Endothelial cell of umbilical vein (primary cell): ENCODE measurements at regions of chr6 and their contacts with region 1.

Region 1: DNA sequence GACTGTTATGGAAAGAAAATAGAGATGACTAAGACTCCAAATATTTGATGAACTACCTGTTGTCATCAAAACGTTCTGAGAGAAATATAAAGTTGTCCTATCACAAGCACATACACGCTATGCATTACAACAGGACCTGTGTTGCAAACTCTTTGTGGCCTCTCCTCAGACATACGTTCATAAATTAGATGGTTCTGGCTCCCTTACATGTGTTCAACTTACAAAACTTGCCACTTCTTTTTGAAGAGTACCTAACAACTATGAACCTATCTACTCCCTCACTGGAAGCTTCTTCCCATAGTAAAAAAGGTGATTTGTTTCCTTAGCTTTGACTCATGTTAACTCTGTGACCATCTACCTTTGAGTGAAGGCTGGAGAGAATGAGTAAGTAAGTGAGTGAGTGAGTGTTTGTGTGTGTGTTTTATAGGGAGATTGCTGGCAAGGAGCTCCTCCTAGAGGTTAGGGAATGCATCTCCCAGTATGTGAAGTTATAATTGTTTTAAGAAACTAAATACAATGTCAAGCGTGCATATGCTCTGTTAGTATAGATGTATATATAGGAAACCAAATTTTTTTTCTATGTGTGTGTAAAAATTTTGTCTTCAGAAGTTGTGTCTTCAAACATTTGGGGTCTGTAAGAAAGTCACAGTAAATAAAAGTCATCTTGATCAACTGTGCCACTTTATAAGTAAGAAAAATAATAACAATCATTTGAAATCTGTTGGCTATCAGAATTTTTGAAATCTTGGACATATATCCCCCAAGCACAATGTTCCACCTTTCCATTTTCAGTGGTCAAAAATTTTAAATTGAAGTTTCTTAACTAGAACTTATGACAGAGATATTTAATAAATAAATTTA is 1211.1 kb upstream of the GJE1 start:
- DNase-seq: peak; percentile 89
- H3K4me3 ChIP-seq: no peak overlapping the region
- H3K27ac ChIP-seq: no peak overlapping the region
- H3K4me1 ChIP-seq: peaks cover 3% of the 10 kb centered on the region
- H3K27me3 ChIP-seq: no peaks in the 10 kb centered on the region
- CTCF ChIP-seq: peak; percentile 58 to 69
- POLR2A ChIP-seq: no peak

Region 2: GRCh38 chr6:139881728-139882211 is 1039.8 kb before region 1 on chr6:
- CTCF ChIA-PET with region 1: no interaction called
- POLR2A ChIA-PET with region 1: no interaction called
- dilution Hi-C with region 1: no loop called
- intact Hi-C with region 1: loop called (anchors 1 kb)
- DNase-seq: peak; percentile 69
- H3K4me3 ChIP-seq: no peak overlapping the region
- H3K27ac ChIP-seq: no peak overlapping the region
- H3K4me1 ChIP-seq: peaks cover 14% of the 10 kb centered on the region
- H3K27me3 ChIP-seq: no peaks in the 10 kb centered on the region
- CTCF ChIP-seq: peak; percentile 42 to 49
- POLR2A ChIP-seq: no peak

Region 3: GRCh38 chr6:140052756-140053729 is 868.6 kb before region 1 on chr6:
- CTCF ChIA-PET with region 1: interaction called, 12 read pairs
- POLR2A ChIA-PET with region 1: no interaction called
- dilution Hi-C with region 1: no loop called
- intact Hi-C with region 1: loop called (anchors 5 kb)
- DNase-seq: peak; percentile 26
- H3K4me3 ChIP-seq: no peak overlapping the region
- H3K27ac ChIP-seq: no peak overlapping the region
- H3K4me1 ChIP-seq: peaks cover 7% of the 10 kb centered on the region
- H3K27me3 ChIP-seq: no peaks in the 10 kb centered on the region
- CTCF ChIP-seq: peak; percentile 16 to 31
- POLR2A ChIP-seq: no peak

Region 4: DNA sequence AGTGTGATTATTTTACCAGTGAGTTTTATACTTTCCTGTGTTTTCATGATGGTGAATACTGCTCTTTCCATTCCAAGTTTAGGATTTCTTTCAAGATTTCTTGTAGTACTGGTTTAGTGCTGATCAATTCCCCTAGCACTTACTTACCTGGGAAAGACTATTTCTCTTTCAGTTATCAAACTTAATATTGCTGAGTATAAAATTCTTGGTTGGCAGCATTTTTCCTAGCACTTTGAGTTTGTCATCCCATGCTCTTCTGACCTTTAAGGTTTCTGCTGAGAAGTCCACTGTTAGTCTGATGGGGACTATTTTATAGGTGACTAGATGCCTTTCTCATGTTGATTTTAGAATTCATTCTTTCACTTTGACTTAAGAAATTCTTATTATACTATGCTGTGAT is 704.3 kb before region 1 on chr6:
- CTCF ChIA-PET with region 1: no interaction called
- POLR2A ChIA-PET with region 1: no interaction called
- dilution Hi-C with region 1: no loop called
- intact Hi-C with region 1: loop called (anchors 5 kb)
- DNase-seq: no peak
- H3K4me3 ChIP-seq: no peak overlapping the region
- H3K27ac ChIP-seq: no peak overlapping the region
- H3K4me1 ChIP-seq: no peaks in the 10 kb centered on the region
- H3K27me3 ChIP-seq: no peaks in the 10 kb centered on the region
- CTCF ChIP-seq: no peak
- POLR2A ChIP-seq: no peak

Region 5: GRCh38 chr6:140441256-140441655 is 480.3 kb before region 1 on chr6:
- CTCF ChIA-PET with region 1: interaction called, 10 read pairs
- POLR2A ChIA-PET with region 1: no interaction called
- dilution Hi-C with region 1: no loop called
- intact Hi-C with region 1: loop called (anchors 5 kb)
- DNase-seq: peak; percentile 57
- H3K4me3 ChIP-seq: no peak overlapping the region
- H3K27ac ChIP-seq: no peak overlapping the region
- H3K4me1 ChIP-seq: peaks cover 18% of the 10 kb centered on the region
- H3K27me3 ChIP-seq: no peaks in the 10 kb centered on the region
- CTCF ChIP-seq: peak; percentile 27 to 40
- POLR2A ChIP-seq: no peak

Region 6: GRCh38 chr6:140572129-140572528 is 349.5 kb before region 1 on chr6:
- CTCF ChIA-PET with region 1: interaction called, 3 read pairs
- POLR2A ChIA-PET with region 1: no interaction called
- dilution Hi-C with region 1: no loop called
- intact Hi-C with region 1: loop called (anchors 2 kb)
- DNase-seq: peak; percentile 96
- H3K4me3 ChIP-seq: no peak overlapping the region
- H3K27ac ChIP-seq: peak overlapping the region; percentile 84
- H3K4me1 ChIP-seq: peaks cover 24% of the 10 kb centered on the region
- H3K27me3 ChIP-seq: no peaks in the 10 kb centered on the region
- CTCF ChIP-seq: no peak
- POLR2A ChIP-seq: peak; percentile 44

Region 7: GRCh38 chr6:140970485-140970884 is 48.9 kb after region 1 on chr6:
- CTCF ChIA-PET with region 1: no interaction called
- POLR2A ChIA-PET with region 1: no interaction called
- dilution Hi-C with region 1: no loop called
- intact Hi-C with region 1: no loop called
- DNase-seq: no peak
- H3K4me3 ChIP-seq: no peak overlapping the region
- H3K27ac ChIP-seq: no peak overlapping the region
- H3K4me1 ChIP-seq: no peaks in the 10 kb centered on the region
- H3K27me3 ChIP-seq: no peaks in the 10 kb centered on the region
- CTCF ChIP-seq: no peak
- POLR2A ChIP-seq: no peak